ENCODE measurements at regions of chr7 and their contacts with region 1.

Region 1: DNA sequence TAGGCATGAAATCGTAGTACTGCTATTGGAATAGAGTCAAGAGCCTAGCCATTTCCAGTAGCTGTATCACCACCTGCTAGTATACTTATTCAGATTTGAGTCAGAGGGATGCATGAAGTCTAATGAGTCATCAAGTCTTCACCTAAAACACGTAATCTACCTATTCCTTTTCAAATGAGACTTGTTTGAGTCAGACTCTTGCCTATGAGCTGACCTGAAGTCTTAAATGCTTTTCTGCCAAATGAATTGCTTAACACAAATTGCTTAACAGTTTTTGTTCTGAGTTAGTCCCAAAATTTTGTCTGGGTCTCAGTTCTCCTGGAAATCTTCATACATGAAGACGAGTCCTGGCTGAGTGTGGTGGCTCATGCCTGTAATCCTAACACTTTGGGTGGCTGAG is 165.2 kb downstream of the GNAT3 start:
- DNase-seq: no peak
- H3K4me3 ChIP-seq: no peak overlapping the region
- H3K27ac ChIP-seq: no peak overlapping the region
- H3K4me1 ChIP-seq: no peaks in the 10 kb centered on the region
- H3K27me3 ChIP-seq: no peaks in the 10 kb centered on the region
- CTCF ChIP-seq: no peak
- POLR2A ChIP-seq: no peak

Region 2: GRCh38 chr7:80298201-80298600 is 48.5 kb before region 1 on chr7:
- CTCF ChIA-PET with region 1: no interaction called
- POLR2A ChIA-PET with region 1: no interaction called
- dilution Hi-C with region 1: no loop called
- intact Hi-C with region 1: no loop called
- DNase-seq: peak; percentile 32
- H3K4me3 ChIP-seq: no peak overlapping the region
- H3K27ac ChIP-seq: no peak overlapping the region
- H3K4me1 ChIP-seq: no peaks in the 10 kb centered on the region
- H3K27me3 ChIP-seq: no peaks in the 10 kb centered on the region
- CTCF ChIP-seq: no peak
- POLR2A ChIP-seq: no peak

Region 3: DNA sequence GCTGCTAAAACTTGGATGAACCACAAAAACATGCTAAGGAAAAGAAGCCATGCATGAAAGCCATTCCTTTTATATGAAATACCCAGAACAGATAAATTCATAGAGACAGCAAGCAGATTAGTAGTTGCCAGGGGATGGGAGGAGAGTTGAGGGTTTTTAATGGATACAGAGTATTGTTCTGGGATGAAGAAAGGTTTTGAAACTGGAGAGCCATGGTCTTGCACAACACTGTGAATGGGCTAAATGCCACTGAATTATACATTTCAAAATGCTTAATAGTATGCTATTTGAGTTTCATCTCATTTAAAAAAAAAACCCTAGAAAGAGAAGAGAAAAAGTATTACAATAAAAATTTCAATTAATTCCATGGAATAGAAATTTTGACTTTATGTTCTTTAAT is 10.8 kb after region 1 on chr7:
- CTCF ChIA-PET with region 1: no interaction called
- POLR2A ChIA-PET with region 1: no interaction called
- dilution Hi-C with region 1: no loop called
- intact Hi-C with region 1: loop called (anchors 1 kb)
- DNase-seq: no peak
- H3K4me3 ChIP-seq: no peak overlapping the region
- H3K27ac ChIP-seq: no peak overlapping the region
- H3K4me1 ChIP-seq: no peaks in the 10 kb centered on the region
- H3K27me3 ChIP-seq: no peaks in the 10 kb centered on the region
- CTCF ChIP-seq: no peak
- POLR2A ChIP-seq: no peak